Right cardiac atrium (tissue), 5 donors: ENCODE measurements at regions of chr9 and their contacts with region 1.

Region 1: GRCh38 chr9:131379056-131379455 is 14.8 kb upstream of the PRRC2B start:
- DNase-seq: no peak
- ATAC-seq: no peak
- H3K4me3 ChIP-seq: no peak overlapping the region
- H3K27ac ChIP-seq: no peak overlapping the region
- H3K4me1 ChIP-seq: peaks cover 5% of the 10 kb centered on the region
- H3K27me3 ChIP-seq: no peaks in the 10 kb centered on the region

Region 2: GRCh38 chr9:131423171-131423581 is 44.1 kb after region 1 on chr9:
- intact Hi-C with region 1: loop called in 1 of 4 experiments (anchors 5 kb)
- DNase-seq: peak; percentile 53 to 86 (median 75)
- ATAC-seq: peak; percentile 73 to 76
- H3K4me3 ChIP-seq: no peak overlapping the region
- H3K27ac ChIP-seq: peak overlapping the region; percentile 38
- H3K4me1 ChIP-seq: peaks cover 23% of the 10 kb centered on the region
- H3K27me3 ChIP-seq: no peaks in the 10 kb centered on the region

Region 3: GRCh38 chr9:131447148-131447547 is 68.1 kb after region 1 on chr9:
- intact Hi-C with region 1: no loop called
- DNase-seq: no peak
- ATAC-seq: peak; percentile 45 to 69
- H3K4me3 ChIP-seq: no peak overlapping the region
- H3K27ac ChIP-seq: no peak overlapping the region
- H3K4me1 ChIP-seq: no peaks in the 10 kb centered on the region
- H3K27me3 ChIP-seq: no peaks in the 10 kb centered on the region

Region 4: GRCh38 chr9:131464354-131465000 is 85.4 kb after region 1 on chr9:
- intact Hi-C with region 1: no loop called
- DNase-seq: no peak
- ATAC-seq: peak in 1 of 2 donors; percentile 24
- H3K4me3 ChIP-seq: no peak overlapping the region
- H3K27ac ChIP-seq: no peak overlapping the region
- H3K4me1 ChIP-seq: no peaks in the 10 kb centered on the region
- H3K27me3 ChIP-seq: no peaks in the 10 kb centered on the region